Caco-2 (cell line): ENCODE measurements at regions of chr11 and their contacts with region 1.

Region 1: GRCh38 chr11:72471005-72471898 is 36.9 kb upstream of the CLPB start:
- DNase-seq: peak; percentile 81 to 84
- H3K4me3 ChIP-seq: no peak overlapping the region
- H3K4me3 Mint-ChIP-seq: no peak overlapping the region
- H3K27ac Mint-ChIP-seq: no peak overlapping the region
- H3K4me1 ChIP-seq: no peaks in the 10 kb centered on the region
- H3K4me1 Mint-ChIP-seq: peaks cover 7% of the 10 kb centered on the region
- H3K27me3 ChIP-seq: no peaks in the 10 kb centered on the region; the same call in 1 of the 2 replicates
- H3K27me3 Mint-ChIP-seq: peaks cover 12% of the 10 kb centered on the region
- CTCF ChIP-seq: peak; percentile 94 to 96

Region 2: DNA sequence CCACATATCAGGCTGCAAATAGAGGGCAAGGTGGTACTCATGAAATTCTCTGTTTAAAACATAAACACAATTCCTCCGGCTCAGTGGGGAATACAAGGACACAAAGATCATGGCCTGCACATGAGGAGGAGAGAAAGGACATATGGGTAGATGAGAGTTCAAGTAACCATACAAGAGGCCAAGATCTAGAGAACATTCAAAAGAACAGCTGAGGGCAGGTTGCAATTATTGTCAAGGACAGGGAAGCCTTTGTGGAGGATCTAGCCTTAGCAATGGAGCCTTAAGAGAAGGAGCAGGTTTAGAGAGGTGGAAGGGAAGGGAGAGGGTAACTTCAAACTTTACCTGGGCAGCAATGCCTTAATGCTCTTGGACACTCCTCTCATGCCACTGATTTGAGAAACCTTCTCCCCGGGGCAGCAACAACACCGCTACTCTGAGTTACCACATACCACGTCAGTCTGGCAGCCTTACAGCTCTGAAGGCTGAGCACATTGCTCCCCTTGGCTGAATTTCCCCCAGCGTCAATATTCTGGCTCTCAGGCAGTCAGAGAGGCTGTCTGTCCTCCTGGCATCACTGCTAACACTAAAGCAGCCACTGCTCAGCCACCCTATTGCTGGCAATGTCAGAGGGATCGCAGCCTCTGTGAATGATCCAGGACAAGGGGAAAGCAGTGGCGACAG is 92.4 kb before region 1 on chr11:
- CTCF ChIA-PET with region 1: no interaction called
- POLR2A ChIA-PET with region 1: no interaction called
- intact Hi-C with region 1: no loop called
- DNase-seq: no peak
- H3K4me3 ChIP-seq: no peak overlapping the region
- H3K4me3 Mint-ChIP-seq: no peak overlapping the region
- H3K27ac Mint-ChIP-seq: no peak overlapping the region
- H3K4me1 ChIP-seq: no peaks in the 10 kb centered on the region
- H3K4me1 Mint-ChIP-seq: no peaks in the 10 kb centered on the region
- H3K27me3 ChIP-seq: no peaks in the 10 kb centered on the region
- H3K27me3 Mint-ChIP-seq: no peaks in the 10 kb centered on the region
- CTCF ChIP-seq: no peak

Region 3: GRCh38 chr11:72454791-72455190 is 16.5 kb before region 1 on chr11:
- CTCF ChIA-PET with region 1: interaction called, 25 read pairs
- POLR2A ChIA-PET with region 1: no interaction called
- intact Hi-C with region 1: no loop called
- DNase-seq: no peak
- H3K4me3 ChIP-seq: no peak overlapping the region
- H3K4me3 Mint-ChIP-seq: no peak overlapping the region
- H3K27ac Mint-ChIP-seq: no peak overlapping the region
- H3K4me1 ChIP-seq: no peaks in the 10 kb centered on the region
- H3K4me1 Mint-ChIP-seq: no peaks in the 10 kb centered on the region
- H3K27me3 ChIP-seq: no peaks in the 10 kb centered on the region
- H3K27me3 Mint-ChIP-seq: peaks cover 22% of the 10 kb centered on the region
- CTCF ChIP-seq: peak; percentile 34 to 53

Region 4: DNA sequence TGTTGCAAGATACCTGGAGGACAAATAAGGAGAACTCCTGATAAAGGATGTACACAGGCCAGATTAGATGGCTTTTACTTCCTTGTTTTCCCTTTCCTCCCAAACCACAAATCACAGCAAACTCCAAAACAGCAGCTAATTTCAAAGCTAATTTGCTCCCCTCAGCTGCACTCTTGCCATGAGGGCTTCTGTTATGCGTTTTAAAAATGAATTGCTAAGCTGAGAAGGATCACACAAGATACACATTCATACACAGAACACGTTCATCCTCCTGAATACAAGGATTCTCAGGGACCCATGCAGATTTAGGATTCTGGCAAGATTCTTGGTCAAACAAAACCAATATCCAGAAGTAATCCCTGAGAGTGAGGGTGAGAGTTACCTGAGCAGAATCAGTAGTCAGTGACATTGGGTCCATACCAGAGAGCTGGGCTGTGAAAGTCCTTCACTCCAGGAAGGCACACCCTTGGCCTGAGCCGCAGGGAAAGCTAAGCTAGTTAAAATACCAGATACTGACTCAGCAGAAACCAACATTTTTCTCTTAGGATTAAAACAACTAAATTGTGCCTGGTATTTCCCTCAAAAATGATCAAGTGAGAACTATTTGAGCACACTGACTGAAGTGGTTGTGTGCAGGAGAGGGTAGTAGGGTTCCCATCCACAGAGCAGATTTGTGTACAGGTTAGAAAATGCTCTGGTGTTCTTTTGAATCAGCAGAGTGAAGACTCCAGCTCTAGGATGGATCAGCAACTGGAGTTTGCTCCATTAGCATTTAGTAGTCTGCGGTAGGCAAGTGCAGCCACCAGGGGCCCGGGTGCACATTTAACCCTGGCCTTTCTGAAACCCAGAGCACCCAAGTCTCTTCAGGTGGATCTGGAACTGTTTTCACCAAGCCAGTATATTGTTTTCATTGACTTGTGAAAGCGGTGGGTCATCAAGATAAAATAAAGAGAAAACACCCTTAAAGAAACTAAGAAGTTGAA is 63.6 kb after region 1 on chr11:
- CTCF ChIA-PET with region 1: interaction called, 10 read pairs
- POLR2A ChIA-PET with region 1: no interaction called
- intact Hi-C with region 1: no loop called
- DNase-seq: peak; percentile 47 to 50
- H3K4me3 ChIP-seq: no peak overlapping the region
- H3K4me3 Mint-ChIP-seq: no peak overlapping the region
- H3K27ac Mint-ChIP-seq: no peak overlapping the region
- H3K4me1 ChIP-seq: peaks cover 15% of the 10 kb centered on the region
- H3K4me1 Mint-ChIP-seq: peaks cover 17% of the 10 kb centered on the region
- H3K27me3 ChIP-seq: no peaks in the 10 kb centered on the region; the same call in 1 of the 2 replicates
- H3K27me3 Mint-ChIP-seq: peaks cover 13% of the 10 kb centered on the region
- CTCF ChIP-seq: peak; percentile 33 to 36

Region 5: GRCh38 chr11:72573072-72573854 is 102.0 kb after region 1 on chr11:
- CTCF ChIA-PET with region 1: interaction called, 77 read pairs
- POLR2A ChIA-PET with region 1: no interaction called
- intact Hi-C with region 1: loop called (anchors 1 kb)
- DNase-seq: peak; percentile 73 to 82
- H3K4me3 ChIP-seq: no peak overlapping the region
- H3K4me3 Mint-ChIP-seq: peak overlapping the region; percentile 9
- H3K27ac Mint-ChIP-seq: peak overlapping the region; percentile 88
- H3K4me1 ChIP-seq: peaks cover 63% of the 10 kb centered on the region
- H3K4me1 Mint-ChIP-seq: peaks cover 51% of the 10 kb centered on the region
- H3K27me3 ChIP-seq: no peaks in the 10 kb centered on the region
- H3K27me3 Mint-ChIP-seq: no peaks in the 10 kb centered on the region
- CTCF ChIP-seq: peak; percentile 82 to 94

Region 6: GRCh38 chr11:72598906-72599305 is 127.7 kb after region 1 on chr11:
- CTCF ChIA-PET with region 1: interaction called, 18 read pairs
- POLR2A ChIA-PET with region 1: no interaction called
- intact Hi-C with region 1: no loop called
- DNase-seq: peak; percentile 72 to 76
- H3K4me3 ChIP-seq: no peak overlapping the region
- H3K4me3 Mint-ChIP-seq: no peak overlapping the region
- H3K27ac Mint-ChIP-seq: no peak overlapping the region
- H3K4me1 ChIP-seq: no peaks in the 10 kb centered on the region
- H3K4me1 Mint-ChIP-seq: no peaks in the 10 kb centered on the region
- H3K27me3 ChIP-seq: peaks cover 4% of the 10 kb centered on the region
- H3K27me3 Mint-ChIP-seq: peaks cover 25% of the 10 kb centered on the region
- CTCF ChIP-seq: peak; percentile 71 to 82

Region 7: GRCh38 chr11:72683782-72684200 is 212.5 kb after region 1 on chr11:
- CTCF ChIA-PET with region 1: interaction called, 56 read pairs
- POLR2A ChIA-PET with region 1: no interaction called
- intact Hi-C with region 1: loop called (anchors 1 kb)
- DNase-seq: peak; percentile 76 to 89
- H3K4me3 ChIP-seq: no peak overlapping the region
- H3K4me3 Mint-ChIP-seq: no peak overlapping the region
- H3K27ac Mint-ChIP-seq: no peak overlapping the region
- H3K4me1 ChIP-seq: no peaks in the 10 kb centered on the region
- H3K4me1 Mint-ChIP-seq: peaks cover 6% of the 10 kb centered on the region
- H3K27me3 ChIP-seq: no peaks in the 10 kb centered on the region
- H3K27me3 Mint-ChIP-seq: peaks cover 9% of the 10 kb centered on the region
- CTCF ChIP-seq: peak; percentile 99

Region 8: DNA sequence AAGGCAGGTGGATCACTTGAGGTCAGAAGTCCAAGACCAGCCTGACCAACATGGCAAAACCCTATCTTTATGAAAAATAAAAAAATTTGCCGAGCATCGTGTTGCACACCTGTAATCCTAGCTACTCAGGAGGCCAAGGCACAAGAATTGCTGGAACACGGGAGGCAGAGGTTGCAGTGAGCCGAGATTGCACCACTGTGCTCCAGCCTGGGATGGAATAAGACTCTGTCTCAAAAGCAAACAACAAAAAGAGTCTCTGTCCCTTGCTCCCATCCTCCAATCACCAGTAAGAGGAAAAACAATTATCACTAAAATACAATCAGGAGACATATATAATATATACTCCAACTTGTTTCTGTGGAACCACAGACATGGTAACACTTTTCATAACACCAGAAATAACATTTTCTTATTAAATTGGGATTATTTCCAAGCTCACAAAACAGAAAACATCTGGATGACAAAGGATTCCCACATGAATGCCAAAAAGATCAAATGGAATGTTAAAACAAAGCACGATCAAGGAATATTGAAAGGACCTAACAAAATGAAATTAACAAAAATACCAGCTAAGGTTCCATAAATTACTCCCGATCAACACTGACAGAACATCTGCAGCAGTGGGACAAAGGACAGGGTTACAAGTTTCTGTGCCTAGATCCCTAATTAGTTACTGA is 655.7 kb after region 1 on chr11:
- CTCF ChIA-PET with region 1: no interaction called
- POLR2A ChIA-PET with region 1: no interaction called
- intact Hi-C with region 1: no loop called
- DNase-seq: no peak
- H3K4me3 ChIP-seq: no peak overlapping the region
- H3K4me3 Mint-ChIP-seq: no peak overlapping the region
- H3K27ac Mint-ChIP-seq: no peak overlapping the region
- H3K4me1 ChIP-seq: 0 out of 2 replicates have a peak, but pooled peaks cover under 1% of the 10 kb centered on the region
- H3K4me1 Mint-ChIP-seq: no peaks in the 10 kb centered on the region
- H3K27me3 ChIP-seq: no peaks in the 10 kb centered on the region
- H3K27me3 Mint-ChIP-seq: no peaks in the 10 kb centered on the region
- CTCF ChIP-seq: no peak